ENCODE measurements at regions of chr10 and their contacts with region 1.

Region 1: DNA sequence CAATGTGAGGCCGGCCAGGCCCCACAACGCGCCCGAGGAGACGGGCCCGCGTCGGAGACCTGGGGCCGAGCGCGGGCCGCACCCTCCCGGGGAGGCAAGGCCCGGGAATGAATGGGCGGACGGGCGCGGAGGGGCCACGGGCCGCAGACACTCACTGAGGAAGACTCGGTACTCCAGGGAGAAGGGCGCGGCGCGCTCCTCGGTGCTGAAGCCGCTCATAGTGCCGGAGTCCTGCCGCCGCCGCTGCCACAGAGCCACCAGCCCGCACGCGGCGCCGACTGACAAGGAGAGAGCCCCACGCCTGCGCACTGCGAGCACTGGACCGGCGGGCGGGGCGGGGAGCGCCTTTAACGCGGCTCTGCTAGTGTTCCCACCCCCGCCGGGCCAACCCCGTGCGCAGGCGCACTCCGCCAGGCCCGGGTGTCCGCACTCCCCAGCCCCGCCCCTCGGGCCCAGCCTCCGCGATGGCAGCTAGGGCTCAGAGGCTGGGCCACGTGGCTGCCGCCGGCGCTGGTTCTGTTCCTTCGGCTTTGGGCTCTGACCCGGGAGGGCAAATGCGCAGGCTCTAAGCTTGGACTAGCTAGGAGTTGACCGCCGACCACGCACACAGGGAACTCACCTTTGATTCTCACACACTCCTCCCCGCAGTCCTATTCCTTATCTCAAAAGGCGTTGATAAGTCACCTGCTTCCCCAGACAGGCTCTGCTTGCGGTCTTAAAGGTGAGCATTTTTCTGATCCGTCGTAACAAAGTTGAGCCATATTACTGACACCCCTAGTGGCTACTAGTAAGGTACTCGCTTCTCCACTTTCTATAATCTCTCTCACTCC is at the start of gene PPA1:
- DNase-seq: peak; percentile 97 to 100 (median 99)
- ATAC-seq: peak; percentile 91
- H3K4me3 ChIP-seq: peak within 1 kb of the TSS; percentile 95
- H3K4me3 Mint-ChIP-seq: peak within 1 kb of the TSS; percentile 94
- H3K27ac ChIP-seq: peak within 1 kb of the TSS; percentile 69 to 74
- H3K27ac Mint-ChIP-seq: peak within 1 kb of the TSS; percentile 92
- H3K4me1 ChIP-seq: peaks cover 20% of the 10 kb centered on the region
- H3K4me1 Mint-ChIP-seq: peaks cover 26% of the 10 kb centered on the region
- H3K27me3 ChIP-seq: no peaks in the 10 kb centered on the region
- H3K27me3 Mint-ChIP-seq: no peaks in the 10 kb centered on the region
- CTCF ChIP-seq: peak; percentile 14
- total RNA-seq, gene PPA1: 69.0 to 69.3 TPM

Region 2: DNA sequence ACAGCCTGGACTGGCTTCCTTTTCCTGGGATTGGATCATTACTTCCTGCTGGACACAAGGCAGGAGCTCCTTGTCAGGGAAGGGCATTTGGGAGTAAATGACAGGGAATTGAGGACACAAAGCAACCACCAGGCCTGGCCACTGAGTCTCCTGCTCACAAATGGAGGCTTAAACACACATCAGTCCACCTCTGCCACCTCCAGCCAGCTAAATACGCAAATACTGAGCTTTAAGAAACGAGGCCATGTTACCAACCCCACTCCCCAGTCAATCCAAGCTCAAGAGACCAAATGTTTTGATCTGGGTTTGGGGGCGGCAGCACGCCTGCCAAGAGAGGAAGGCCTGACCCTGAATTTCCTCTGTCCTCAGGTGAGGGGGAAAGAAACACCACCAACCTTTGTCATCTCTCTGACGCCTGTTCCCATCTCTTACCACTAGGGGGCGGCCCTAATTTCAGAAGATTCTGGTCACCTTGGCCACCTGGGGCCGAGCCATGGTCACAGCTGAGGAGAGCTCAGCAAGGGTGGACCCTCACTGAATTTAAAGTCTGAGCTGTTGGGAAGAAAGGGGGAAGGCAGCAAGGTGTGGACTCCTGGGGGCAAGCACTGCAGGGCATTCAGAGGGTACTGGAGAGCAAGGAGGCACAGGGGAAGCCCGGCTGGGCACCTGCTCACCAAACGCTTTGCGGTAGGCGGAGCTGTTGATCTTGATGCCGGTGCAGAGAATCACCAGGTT is 117.2 kb before region 1 on chr10:
- CTCF ChIA-PET with region 1: no interaction called
- POLR2A ChIA-PET with region 1: no interaction called
- intact Hi-C with region 1: no loop called
- DNase-seq: peak; percentile 26 to 76 (median 42)
- ATAC-seq: peak; percentile 88
- H3K4me3 ChIP-seq: no peak overlapping the region
- H3K4me3 Mint-ChIP-seq: no peak overlapping the region
- H3K27ac ChIP-seq: no peak overlapping the region
- H3K27ac Mint-ChIP-seq: no peak overlapping the region
- H3K4me1 ChIP-seq: peaks cover 9% of the 10 kb centered on the region
- H3K4me1 Mint-ChIP-seq: peaks cover 6% of the 10 kb centered on the region
- H3K27me3 ChIP-seq: no peaks in the 10 kb centered on the region
- H3K27me3 Mint-ChIP-seq: no peaks in the 10 kb centered on the region
- CTCF ChIP-seq: peak; percentile 90

Region 3: GRCh38 chr10:70169649-70170364 is 63.5 kb before region 1 on chr10:
- CTCF ChIA-PET with region 1: interaction called, 4 read pairs
- POLR2A ChIA-PET with region 1: interaction called, 14 read pairs
- intact Hi-C with region 1: loop called (anchors 1 to 2 kb)
- DNase-seq: peak in 3 of 14 experiments; percentile 24 to 50 (median 28)
- ATAC-seq: peak; percentile 21
- H3K4me3 ChIP-seq: peak overlapping the region; percentile 97
- H3K4me3 Mint-ChIP-seq: peak overlapping the region; percentile 98
- H3K27ac ChIP-seq: peak overlapping the region; percentile 75 to 93
- H3K27ac Mint-ChIP-seq: peak overlapping the region; percentile 94
- H3K4me1 ChIP-seq: peaks cover 60% of the 10 kb centered on the region
- H3K4me1 Mint-ChIP-seq: peaks cover 64% of the 10 kb centered on the region
- H3K27me3 ChIP-seq: no peaks in the 10 kb centered on the region
- H3K27me3 Mint-ChIP-seq: no peaks in the 10 kb centered on the region
- CTCF ChIP-seq: no peak

Region 4: DNA sequence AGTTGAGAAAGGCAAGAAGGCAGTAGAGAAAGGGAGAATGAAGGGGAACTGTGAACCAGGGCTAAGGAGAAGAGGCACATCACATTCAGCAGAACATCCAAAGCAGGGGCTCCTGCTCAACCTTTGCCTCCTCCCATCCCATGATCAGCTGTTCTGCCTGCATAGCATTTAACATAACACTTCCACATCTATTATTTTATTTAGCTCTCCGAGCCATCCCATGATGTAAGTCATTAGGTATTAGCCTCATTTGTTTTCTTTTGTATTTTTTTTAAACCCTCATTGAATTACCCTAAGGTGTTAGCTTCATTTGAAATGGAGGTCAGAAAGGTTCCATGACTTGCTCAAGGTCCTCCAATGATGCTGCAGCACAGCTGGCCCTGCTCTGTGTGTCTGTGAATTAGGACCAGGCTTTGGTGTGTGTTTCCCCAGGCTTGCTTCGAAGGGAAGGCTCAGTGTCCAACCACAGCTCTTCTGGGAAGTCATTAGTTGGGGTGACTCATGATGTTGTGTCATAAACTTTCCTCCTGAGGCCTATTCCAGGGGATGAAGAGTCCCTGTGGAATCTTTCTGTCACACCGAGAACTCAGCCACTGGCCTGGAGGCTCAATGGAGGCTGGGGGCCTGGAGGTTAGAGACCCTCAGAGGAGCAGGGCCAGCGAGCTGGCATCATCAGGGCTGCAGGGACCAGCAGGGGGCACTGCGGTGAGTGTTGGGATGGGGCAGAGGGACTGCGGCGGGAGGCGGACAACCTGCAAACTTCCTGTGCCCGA is 34.0 kb after region 1 on chr10:
- CTCF ChIA-PET with region 1: interaction called, 6 read pairs
- POLR2A ChIA-PET with region 1: no interaction called
- intact Hi-C with region 1: loop called in 1 of 2 experiments (anchors 5 kb)
- DNase-seq: peak in 3 of 14 experiments; percentile 10 to 51 (median 38)
- ATAC-seq: no peak
- H3K4me3 ChIP-seq: no peak overlapping the region
- H3K4me3 Mint-ChIP-seq: no peak overlapping the region
- H3K27ac ChIP-seq: no peak overlapping the region
- H3K27ac Mint-ChIP-seq: no peak overlapping the region
- H3K4me1 ChIP-seq: no peaks in the 10 kb centered on the region
- H3K4me1 Mint-ChIP-seq: peaks cover 2% of the 10 kb centered on the region
- H3K27me3 ChIP-seq: no peaks in the 10 kb centered on the region
- H3K27me3 Mint-ChIP-seq: peaks cover 8% of the 10 kb centered on the region
- CTCF ChIP-seq: no peak

Region 5: GRCh38 chr10:70404036-70404786 is 170.9 kb after region 1 on chr10 and contains the start of gene EIF4EBP2:
- CTCF ChIA-PET with region 1: interaction called, 4 read pairs
- POLR2A ChIA-PET with region 1: interaction called, 30 read pairs
- intact Hi-C with region 1: loop called in 1 of 2 experiments (anchors 2 kb)
- DNase-seq: peak; percentile 94 to 100 (median 98)
- ATAC-seq: peak; percentile 93
- H3K4me3 ChIP-seq: peak within 1 kb of the TSS; percentile 87
- H3K4me3 Mint-ChIP-seq: peak within 1 kb of the TSS; percentile 96
- H3K27ac ChIP-seq: peak within 1 kb of the TSS; percentile 60 to 74
- H3K27ac Mint-ChIP-seq: peak within 1 kb of the TSS; percentile 86
- H3K4me1 ChIP-seq: peaks cover 35% of the 10 kb centered on the region
- H3K4me1 Mint-ChIP-seq: peaks cover 50% of the 10 kb centered on the region
- H3K27me3 ChIP-seq: no peaks in the 10 kb centered on the region
- H3K27me3 Mint-ChIP-seq: no peaks in the 10 kb centered on the region
- CTCF ChIP-seq: no peak
- total RNA-seq, gene EIF4EBP2: 21.4 to 22.6 TPM

Region 6: GRCh38 chr10:70815504-70816219 is 582.3 kb after region 1 on chr10 and contains the start of gene SGPL1:
- CTCF ChIA-PET with region 1: no interaction called
- POLR2A ChIA-PET with region 1: no interaction called
- intact Hi-C with region 1: loop called in 1 of 2 experiments (anchors 5 kb)
- DNase-seq: peak; percentile 64 to 92 (median 82)
- ATAC-seq: peak; percentile 89
- H3K4me3 ChIP-seq: peak within 1 kb of the TSS; percentile 79
- H3K4me3 Mint-ChIP-seq: peak within 1 kb of the TSS; percentile 90
- H3K27ac ChIP-seq: peak within 1 kb of the TSS in 1 of 2 donors; percentile 44
- H3K27ac Mint-ChIP-seq: peak within 1 kb of the TSS; percentile 80
- H3K4me1 ChIP-seq: peaks cover 25% of the 10 kb centered on the region
- H3K4me1 Mint-ChIP-seq: peaks cover 52% of the 10 kb centered on the region
- H3K27me3 ChIP-seq: no peaks in the 10 kb centered on the region
- H3K27me3 Mint-ChIP-seq: no peaks in the 10 kb centered on the region
- CTCF ChIP-seq: peak; percentile 88
- total RNA-seq, gene SGPL1: 15.1 to 16.9 TPM

Region 7: DNA sequence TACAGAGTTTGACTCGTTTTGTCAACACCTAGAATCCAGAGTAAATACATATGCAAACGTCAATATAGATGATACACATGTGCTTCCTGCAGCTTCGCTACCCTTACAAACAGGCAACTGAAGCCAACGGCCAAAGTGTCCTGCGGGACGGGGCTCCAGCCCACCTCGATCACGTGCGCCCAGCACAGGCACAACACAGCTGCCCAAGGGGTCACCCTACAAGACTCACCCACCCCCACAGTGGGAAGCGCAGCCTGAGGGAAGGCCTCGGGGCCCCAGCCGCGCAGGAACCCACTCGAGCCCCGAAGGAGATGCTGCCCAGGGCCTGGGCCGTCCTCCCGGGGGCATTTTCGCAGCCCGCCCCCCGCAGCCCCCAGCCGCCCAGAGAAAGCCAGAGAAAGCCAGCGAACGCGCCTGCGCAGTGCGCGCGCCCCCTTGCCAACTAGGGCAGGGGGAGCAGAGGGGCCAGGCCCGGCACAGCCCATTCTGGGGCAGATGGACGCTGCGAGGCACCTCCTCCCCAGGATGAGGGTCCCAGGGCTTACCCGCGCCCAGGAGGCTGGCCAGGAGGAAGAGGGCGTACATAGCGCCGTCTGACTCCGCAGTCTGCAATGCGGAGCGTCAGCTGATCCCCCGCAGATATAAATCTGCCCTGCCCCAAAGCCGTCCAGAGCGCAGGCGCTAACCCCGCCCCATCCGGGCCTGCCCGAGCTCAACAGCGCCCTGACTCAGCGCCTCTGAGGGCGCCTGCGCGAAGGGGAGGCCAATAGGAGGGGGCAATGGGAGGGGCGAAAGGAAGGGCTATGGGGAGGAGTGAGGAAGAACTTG is 1617.5 kb after region 1 on chr10 and contains the start of gene PSAP:
- CTCF ChIA-PET with region 1: no interaction called
- POLR2A ChIA-PET with region 1: no interaction called
- intact Hi-C with region 1: loop called in 1 of 2 experiments (anchors 5 kb)
- DNase-seq: peak; percentile 97 to 99 (median 98)
- ATAC-seq: peak; percentile 96
- H3K4me3 ChIP-seq: peak within 1 kb of the TSS; percentile 99
- H3K4me3 Mint-ChIP-seq: peak within 1 kb of the TSS; percentile 96
- H3K27ac ChIP-seq: peak within 1 kb of the TSS; percentile 47 to 85
- H3K27ac Mint-ChIP-seq: peak within 1 kb of the TSS; percentile 85
- H3K4me1 ChIP-seq: peaks cover 33% of the 10 kb centered on the region
- H3K4me1 Mint-ChIP-seq: peaks cover 51% of the 10 kb centered on the region
- H3K27me3 ChIP-seq: no peaks in the 10 kb centered on the region
- H3K27me3 Mint-ChIP-seq: no peaks in the 10 kb centered on the region
- CTCF ChIP-seq: no peak
- total RNA-seq, gene PSAP: 191 to 206 TPM

Measured in CD4-positive, alpha-beta T cell (primary cell).